Endothelial cell of umbilical vein (primary cell): ENCODE measurements at regions of chr21 and their contacts with region 1.

Region 1: DNA sequence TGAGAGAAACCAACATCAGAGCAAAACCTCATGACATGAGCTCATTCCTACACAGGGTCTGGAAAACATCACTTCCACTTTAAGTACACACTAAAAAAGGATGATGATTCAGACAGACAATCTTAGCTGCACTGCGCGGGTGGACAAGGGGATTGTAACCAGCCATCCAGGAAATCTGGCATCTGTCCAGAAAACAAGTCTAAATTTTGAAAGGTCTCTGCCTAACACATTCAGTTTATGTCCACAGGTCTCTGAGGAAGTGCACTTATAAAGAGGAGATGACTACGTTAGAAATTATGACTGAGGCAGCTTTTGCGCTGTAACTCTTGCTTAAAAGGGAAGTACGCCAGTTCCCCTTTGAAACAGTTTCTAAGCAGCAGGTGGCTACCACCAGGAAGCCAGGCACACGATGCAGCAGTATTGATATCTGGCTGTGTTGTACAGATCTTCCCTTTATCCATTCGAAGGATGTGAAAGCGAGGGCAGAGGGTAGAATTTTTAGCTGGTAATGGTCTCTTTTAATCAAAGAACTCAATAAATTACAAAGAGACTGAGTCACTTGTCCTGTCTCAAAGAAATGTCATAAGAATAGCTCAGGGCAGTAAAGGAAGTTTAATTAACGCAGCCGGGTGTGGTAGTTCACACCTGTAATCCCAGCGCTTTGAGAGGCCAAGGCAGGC is 128.0 kb downstream of the SETD4 start:
- DNase-seq: peak; percentile 95
- H3K4me3 ChIP-seq: peak overlapping the region in 1 of 3 experiments; percentile 21
- H3K27ac ChIP-seq: peak overlapping the region; percentile 87
- H3K4me1 ChIP-seq: peaks cover 26% of the 10 kb centered on the region
- H3K27me3 ChIP-seq: no peaks in the 10 kb centered on the region
- CTCF ChIP-seq: no peak
- POLR2A ChIP-seq: no peak

Region 2: DNA sequence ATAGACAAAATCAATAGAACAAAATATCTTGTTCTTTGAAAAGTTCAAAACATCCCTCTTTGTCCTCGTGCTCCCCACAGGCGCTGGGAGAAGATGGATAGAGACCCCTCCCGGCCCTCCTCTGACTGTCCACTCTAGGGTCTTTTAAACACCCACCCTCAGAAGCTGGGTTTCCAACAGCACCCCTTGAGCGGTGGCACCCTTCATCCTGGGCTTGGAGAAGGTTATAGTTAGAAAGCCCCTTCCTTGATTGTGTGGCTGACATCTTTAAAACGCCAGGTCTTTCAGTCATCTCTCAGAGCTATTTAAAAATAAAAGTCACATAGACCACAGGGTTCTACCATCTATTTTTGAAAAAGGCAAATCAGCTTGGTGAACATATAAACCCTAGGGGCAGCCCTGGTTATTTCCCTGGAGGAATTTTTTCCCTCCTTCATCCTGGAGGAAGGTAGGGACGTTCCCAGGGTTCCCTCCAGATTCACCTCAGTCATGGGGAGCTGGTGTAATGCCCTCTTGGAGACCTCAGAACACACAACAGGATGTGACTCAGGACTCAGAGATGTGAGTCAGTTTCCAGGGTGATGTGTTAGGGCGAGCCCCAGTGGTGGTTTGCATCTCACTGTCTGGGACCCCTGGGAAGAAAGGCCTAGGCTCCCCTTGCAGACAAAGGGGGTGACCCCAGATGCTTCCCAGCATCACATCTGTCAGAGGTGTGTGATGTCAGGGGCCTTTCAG is 1125.1 kb before region 1 on chr21:
- CTCF ChIA-PET with region 1: no interaction called
- POLR2A ChIA-PET with region 1: no interaction called
- dilution Hi-C with region 1: no loop called
- intact Hi-C with region 1: loop called (anchors 1 kb)
- DNase-seq: peak; percentile 94
- H3K4me3 ChIP-seq: no peak overlapping the region
- H3K27ac ChIP-seq: peak overlapping the region; percentile 100
- H3K4me1 ChIP-seq: peaks cover 37% of the 10 kb centered on the region
- H3K27me3 ChIP-seq: no peaks in the 10 kb centered on the region
- CTCF ChIP-seq: no peak
- POLR2A ChIP-seq: no peak

Region 3: GRCh38 chr21:35256467-35256988 is 675.8 kb before region 1 on chr21:
- CTCF ChIA-PET with region 1: no interaction called
- POLR2A ChIA-PET with region 1: no interaction called
- dilution Hi-C with region 1: no loop called
- intact Hi-C with region 1: loop called (anchors 2 kb)
- DNase-seq: peak; percentile 98
- H3K4me3 ChIP-seq: peak overlapping the region in 2 of 3 experiments; percentile 20 to 47
- H3K27ac ChIP-seq: peak overlapping the region; percentile 78
- H3K4me1 ChIP-seq: peaks cover 15% of the 10 kb centered on the region
- H3K27me3 ChIP-seq: no peaks in the 10 kb centered on the region
- CTCF ChIP-seq: no peak
- POLR2A ChIP-seq: no peak

Region 4: GRCh38 chr21:35643176-35643575 is 289.2 kb before region 1 on chr21:
- CTCF ChIA-PET with region 1: no interaction called
- POLR2A ChIA-PET with region 1: no interaction called
- dilution Hi-C with region 1: no loop called
- intact Hi-C with region 1: loop called (anchors 2 kb)
- DNase-seq: peak; percentile 65
- H3K4me3 ChIP-seq: no peak overlapping the region
- H3K27ac ChIP-seq: peak overlapping the region; percentile 39
- H3K4me1 ChIP-seq: peaks cover 4% of the 10 kb centered on the region
- H3K27me3 ChIP-seq: no peaks in the 10 kb centered on the region
- CTCF ChIP-seq: no peak
- POLR2A ChIP-seq: no peak

Region 5: DNA sequence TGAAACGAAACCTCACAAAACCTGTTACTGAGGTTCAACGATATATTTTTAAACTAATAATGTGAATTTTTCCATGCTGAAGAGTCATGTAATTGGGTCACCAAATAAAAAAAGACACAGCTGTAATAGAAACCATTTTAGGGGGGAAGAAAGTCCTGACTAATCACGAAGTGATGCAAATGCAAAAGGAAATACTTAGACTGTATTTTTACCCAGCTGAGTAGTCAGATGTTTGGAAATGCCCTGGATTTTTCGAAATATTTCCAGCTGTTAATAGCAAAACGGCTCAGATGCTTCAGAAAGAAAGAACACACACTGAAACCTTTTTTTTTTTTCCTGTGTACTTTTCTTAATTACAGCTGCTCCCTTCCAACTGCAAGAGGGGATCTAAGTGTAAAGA is 82.3 kb before region 1 on chr21:
- CTCF ChIA-PET with region 1: interaction called, 3 read pairs
- POLR2A ChIA-PET with region 1: no interaction called
- dilution Hi-C with region 1: no loop called
- intact Hi-C with region 1: loop called (anchors 2 kb)
- DNase-seq: peak; percentile 8
- H3K4me3 ChIP-seq: no peak overlapping the region
- H3K27ac ChIP-seq: no peak overlapping the region
- H3K4me1 ChIP-seq: peaks cover 13% of the 10 kb centered on the region
- H3K27me3 ChIP-seq: peaks cover 0 to 1% of the 10 kb centered on the region in 2 experiments
- CTCF ChIP-seq: no peak
- POLR2A ChIP-seq: no peak